ENCODE measurements at regions of chr4 and their contacts with region 1.

Region 1: GRCh38 chr4:47945930-47946726 is 31.7 kb upstream of the NFXL1 start:
- DNase-seq: no peak
- H3K4me3 ChIP-seq: no peak overlapping the region
- H3K27ac ChIP-seq: no peak overlapping the region
- H3K4me1 ChIP-seq: no peaks in the 10 kb centered on the region
- H3K27me3 ChIP-seq: no peaks in the 10 kb centered on the region
- CTCF ChIP-seq: no peak
- POLR2A ChIP-seq: no peak

Region 2: DNA sequence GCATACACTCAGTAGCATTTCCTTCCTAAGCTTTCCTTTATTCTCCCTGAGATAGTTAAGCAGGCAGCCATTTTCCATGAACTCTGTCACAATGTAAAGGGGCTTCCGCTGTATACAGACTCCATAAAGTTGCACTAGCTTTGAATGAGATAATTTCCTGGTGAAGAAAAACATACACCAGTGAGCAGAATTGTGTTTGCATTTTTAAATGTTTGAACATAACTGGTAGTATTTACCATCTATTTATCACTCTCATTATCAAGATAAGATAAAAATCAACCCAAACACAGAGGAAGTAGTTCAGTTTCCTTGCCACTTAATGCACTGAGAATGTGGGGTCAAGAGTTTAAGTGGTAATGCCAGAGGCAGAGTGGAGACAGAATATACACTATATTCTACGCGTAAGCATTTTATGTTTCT is 133.9 kb after region 1 on chr4:
- intact Hi-C with region 1: loop called (anchors 10 kb)
- DNase-seq: no peak
- H3K4me3 ChIP-seq: no peak overlapping the region
- H3K27ac ChIP-seq: no peak overlapping the region
- H3K4me1 ChIP-seq: peaks cover 0 to 4% (median 3%) of the 10 kb centered on the region in 6 donors
- H3K27me3 ChIP-seq: peaks cover 0 to 8% (median 0%) of the 10 kb centered on the region in 7 donors
- CTCF ChIP-seq: no peak
- POLR2A ChIP-seq: no peak

Measured in spleen (tissue), 13 donors.